PC-9 (cell line): ENCODE measurements at regions of chr11 and their contacts with region 1.

Region 1: GRCh38 chr11:111283945-111284481 is 14.3 kb upstream of the POU2AF3 start:
- DNase-seq: no peak
- H3K4me3 ChIP-seq: no peak overlapping the region
- H3K27ac ChIP-seq: no peak overlapping the region
- H3K4me1 ChIP-seq: no peaks in the 10 kb centered on the region
- H3K27me3 ChIP-seq: no peaks in the 10 kb centered on the region
- CTCF ChIP-seq: no peak

Region 2: GRCh38 chr11:111422494-111423249 is 138.7 kb after region 1 on chr11:
- CTCF ChIA-PET with region 1: interaction called, 6 read pairs
- POLR2A ChIA-PET with region 1: no interaction called
- intact Hi-C with region 1: loop called (anchors 1 kb)
- DNase-seq: peak; percentile 57 to 63
- H3K4me3 ChIP-seq: no peak overlapping the region
- H3K27ac ChIP-seq: no peak overlapping the region
- H3K4me1 ChIP-seq: no peaks in the 10 kb centered on the region
- H3K27me3 ChIP-seq: no peaks in the 10 kb centered on the region
- CTCF ChIP-seq: peak; percentile 95

Region 3: DNA sequence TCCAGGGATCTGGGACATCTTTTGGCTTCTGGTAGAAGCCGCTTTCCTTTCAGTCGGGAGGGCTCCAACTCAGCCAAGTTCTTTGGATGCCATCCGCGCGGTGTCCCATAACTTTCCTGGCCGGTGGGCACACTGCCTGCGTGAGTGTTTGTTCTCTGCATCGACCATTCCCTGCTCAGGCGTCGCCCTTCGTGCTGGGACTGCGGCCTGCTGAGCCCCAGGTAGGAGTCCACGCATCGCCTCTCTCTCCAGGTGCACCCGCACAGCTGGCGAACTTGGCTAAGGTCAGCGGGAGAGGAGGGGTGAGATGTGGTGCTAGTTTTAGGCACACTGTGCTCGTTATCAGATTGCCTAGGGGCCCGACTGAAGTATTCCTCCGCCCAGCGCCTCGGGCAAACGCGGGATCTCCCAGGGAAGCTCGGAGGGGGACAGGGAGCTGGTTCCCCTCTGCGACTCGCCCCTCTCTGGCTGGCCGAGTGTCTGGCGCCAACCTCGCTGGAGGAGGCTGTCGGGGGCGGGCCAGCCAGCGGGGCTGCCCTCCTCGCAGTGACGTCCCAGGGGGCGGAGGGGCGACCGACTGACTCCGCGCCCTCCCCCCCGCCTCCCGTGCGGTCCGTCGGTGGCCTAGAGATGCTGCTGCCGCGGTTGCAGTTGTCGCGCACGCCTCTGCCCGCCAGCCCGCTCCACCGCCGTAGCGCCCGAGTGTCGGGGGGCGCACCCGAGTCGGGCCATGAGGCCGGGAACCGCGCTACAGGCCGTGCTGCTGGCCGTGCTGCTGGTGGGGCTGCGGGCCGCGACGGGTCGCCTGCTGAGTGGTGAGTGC is 256.3 kb after region 1 on chr11 and contains the start of gene LAYN:
- CTCF ChIA-PET with region 1: interaction called, 10 read pairs
- POLR2A ChIA-PET with region 1: no interaction called
- intact Hi-C with region 1: no loop called
- DNase-seq: peak in 1 of 2 experiments; percentile 68
- H3K4me3 ChIP-seq: peak within 1 kb of the TSS; percentile 57
- H3K27ac ChIP-seq: no peak within 1 kb of the TSS
- H3K4me1 ChIP-seq: peaks cover 22% of the 10 kb centered on the region
- H3K27me3 ChIP-seq: no peaks in the 10 kb centered on the region
- CTCF ChIP-seq: no peak
- total RNA-seq, gene LAYN: 19.9 and 22.2 TPM in 2 replicates

Region 4: GRCh38 chr11:111841370-111842053 is 557.5 kb after region 1 on chr11:
- CTCF ChIA-PET with region 1: no interaction called
- POLR2A ChIA-PET with region 1: no interaction called
- intact Hi-C with region 1: loop called (anchors 10 kb)
- DNase-seq: peak; percentile 72 to 84
- H3K4me3 ChIP-seq: no peak overlapping the region
- H3K27ac ChIP-seq: peak overlapping the region; percentile 50
- H3K4me1 ChIP-seq: peaks cover 79% of the 10 kb centered on the region
- H3K27me3 ChIP-seq: no peaks in the 10 kb centered on the region
- CTCF ChIP-seq: peak; percentile 98